ENCODE measurements at regions of chr7 and their contacts with region 1.

Region 1: DNA sequence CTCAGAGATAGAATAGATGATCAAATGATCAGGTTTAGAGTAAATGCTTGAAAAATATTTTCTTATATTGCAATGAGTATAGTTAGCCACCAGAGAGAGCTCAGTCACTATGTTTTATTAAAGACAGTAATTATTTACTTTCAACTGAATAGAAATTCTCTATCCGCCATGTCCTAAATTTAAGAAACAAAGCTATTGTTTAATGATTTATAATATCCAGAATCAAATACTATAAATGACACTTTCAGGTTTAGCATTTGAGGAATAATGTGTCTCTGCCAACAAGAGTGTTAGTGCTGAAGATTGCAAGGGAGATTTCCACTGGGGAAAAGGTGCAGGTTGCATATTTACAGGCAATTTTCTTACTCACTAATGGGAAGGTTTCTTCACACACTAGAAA is 184.7 kb downstream of the DGKB start:
- DNase-seq: no peak
- H3K4me3 ChIP-seq: no peak overlapping the region
- H3K27ac ChIP-seq: no peak overlapping the region
- H3K4me1 ChIP-seq: no peaks in the 10 kb centered on the region
- H3K27me3 ChIP-seq: no peaks in the 10 kb centered on the region
- CTCF ChIP-seq: peak in 3 of 6 experiments; percentile 30 to 42 (median 34)
- POLR2A ChIP-seq: no peak

Region 2: GRCh38 chr7:14639329-14640200 is 78.3 kb before region 1 on chr7:
- intact Hi-C with region 1: no loop called
- DNase-seq: no peak
- H3K4me3 ChIP-seq: no peak overlapping the region
- H3K27ac ChIP-seq: no peak overlapping the region
- H3K4me1 ChIP-seq: no peaks in the 10 kb centered on the region
- H3K27me3 ChIP-seq: no peaks in the 10 kb centered on the region
- CTCF ChIP-seq: no peak
- POLR2A ChIP-seq: no peak

Region 3: GRCh38 chr7:15015545-15016326 is 297.9 kb after region 1 on chr7:
- intact Hi-C with region 1: loop called (anchors 10 kb)
- DNase-seq: peak; percentile 30 to 38
- H3K4me3 ChIP-seq: no peak overlapping the region
- H3K27ac ChIP-seq: no peak overlapping the region
- H3K4me1 ChIP-seq: no peaks in the 10 kb centered on the region
- H3K27me3 ChIP-seq: no peaks in the 10 kb centered on the region
- CTCF ChIP-seq: peak; percentile 27 to 67 (median 46)
- POLR2A ChIP-seq: no peak

Measured in thyroid gland (tissue), 4 donors.